ENCODE measurements at regions of chr17 and their contacts with region 1.

Region 1: DNA sequence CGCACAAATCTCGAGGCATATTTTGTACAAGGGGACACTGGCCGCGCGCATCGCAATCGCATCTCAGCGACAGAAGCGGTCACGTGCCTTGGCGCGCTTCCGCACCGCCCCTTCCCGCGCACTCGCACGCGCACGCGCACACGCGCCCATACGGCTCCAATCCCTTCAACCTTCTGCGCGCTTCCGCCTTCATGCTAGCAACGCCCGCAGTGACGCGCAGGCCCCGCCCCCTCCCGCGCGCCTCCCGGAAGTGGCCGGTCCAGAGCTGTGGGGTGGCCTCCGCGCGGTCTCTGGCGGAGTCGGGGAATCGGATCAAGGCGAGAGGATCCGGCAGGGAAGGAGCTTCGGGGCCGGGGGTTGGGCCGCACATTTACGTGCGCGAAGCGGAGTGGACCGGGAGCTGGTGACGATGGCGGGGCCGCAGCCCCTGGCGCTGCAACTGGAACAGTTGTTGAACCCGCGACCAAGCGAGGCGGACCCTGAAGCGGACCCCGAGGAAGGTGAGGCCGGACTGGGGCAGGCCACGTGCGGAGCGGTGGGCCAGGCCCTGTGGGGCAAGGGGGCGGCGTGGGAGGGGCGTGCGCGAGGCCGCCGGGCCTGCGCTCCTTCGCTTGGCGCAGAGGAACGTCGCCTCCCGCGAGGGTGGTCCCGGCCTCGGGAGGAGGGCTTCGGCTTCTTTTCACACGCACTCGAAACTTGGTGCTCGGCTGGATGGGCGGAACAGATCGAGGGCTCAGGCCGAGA is at the start of gene AATF:
- DNase-seq: peak; percentile 82 to 99 (median 96)
- ATAC-seq: peak; percentile 91
- H3K4me3 ChIP-seq: peak within 1 kb of the TSS; percentile 81 to 91
- H3K4me3 Mint-ChIP-seq: peak within 1 kb of the TSS; percentile 98
- H3K27ac ChIP-seq: peak within 1 kb of the TSS; percentile 88 to 90
- H3K27ac Mint-ChIP-seq: peak within 1 kb of the TSS; percentile 98
- H3K4me1 ChIP-seq: peaks cover 26% of the 10 kb centered on the region
- H3K4me1 Mint-ChIP-seq: peaks cover 60% of the 10 kb centered on the region
- H3K27me3 ChIP-seq: peaks cover 28 to 34% of the 10 kb centered on the region in 2 experiments
- H3K27me3 Mint-ChIP-seq: peaks cover 31% of the 10 kb centered on the region
- CTCF ChIP-seq: no peak
- total RNA-seq, gene AATF: 49.5 to 51.5 TPM

Region 2: GRCh38 chr17:36486204-36487194 is 462.4 kb before region 1 on chr17 and contains the start of gene ZNHIT3:
- CTCF ChIA-PET with region 1: no interaction called
- POLR2A ChIA-PET with region 1: no interaction called
- intact Hi-C with region 1: loop called in 1 of 2 experiments (anchors 10 kb)
- DNase-seq: peak; percentile 80 to 96 (median 90)
- ATAC-seq: peak; percentile 96
- H3K4me3 ChIP-seq: peak within 1 kb of the TSS; percentile 64 to 97
- H3K4me3 Mint-ChIP-seq: peak within 1 kb of the TSS; percentile 100
- H3K27ac ChIP-seq: peak within 1 kb of the TSS; percentile 69 to 70
- H3K27ac Mint-ChIP-seq: peak within 1 kb of the TSS; percentile 99
- H3K4me1 ChIP-seq: peaks cover 45% of the 10 kb centered on the region
- H3K4me1 Mint-ChIP-seq: peaks cover 55% of the 10 kb centered on the region
- H3K27me3 ChIP-seq: peaks cover 0 to 10% of the 10 kb centered on the region in 2 experiments
- H3K27me3 Mint-ChIP-seq: peaks cover 10% of the 10 kb centered on the region
- CTCF ChIP-seq: no peak
- total RNA-seq, gene ZNHIT3: 82.2 to 87.1 TPM

Region 3: DNA sequence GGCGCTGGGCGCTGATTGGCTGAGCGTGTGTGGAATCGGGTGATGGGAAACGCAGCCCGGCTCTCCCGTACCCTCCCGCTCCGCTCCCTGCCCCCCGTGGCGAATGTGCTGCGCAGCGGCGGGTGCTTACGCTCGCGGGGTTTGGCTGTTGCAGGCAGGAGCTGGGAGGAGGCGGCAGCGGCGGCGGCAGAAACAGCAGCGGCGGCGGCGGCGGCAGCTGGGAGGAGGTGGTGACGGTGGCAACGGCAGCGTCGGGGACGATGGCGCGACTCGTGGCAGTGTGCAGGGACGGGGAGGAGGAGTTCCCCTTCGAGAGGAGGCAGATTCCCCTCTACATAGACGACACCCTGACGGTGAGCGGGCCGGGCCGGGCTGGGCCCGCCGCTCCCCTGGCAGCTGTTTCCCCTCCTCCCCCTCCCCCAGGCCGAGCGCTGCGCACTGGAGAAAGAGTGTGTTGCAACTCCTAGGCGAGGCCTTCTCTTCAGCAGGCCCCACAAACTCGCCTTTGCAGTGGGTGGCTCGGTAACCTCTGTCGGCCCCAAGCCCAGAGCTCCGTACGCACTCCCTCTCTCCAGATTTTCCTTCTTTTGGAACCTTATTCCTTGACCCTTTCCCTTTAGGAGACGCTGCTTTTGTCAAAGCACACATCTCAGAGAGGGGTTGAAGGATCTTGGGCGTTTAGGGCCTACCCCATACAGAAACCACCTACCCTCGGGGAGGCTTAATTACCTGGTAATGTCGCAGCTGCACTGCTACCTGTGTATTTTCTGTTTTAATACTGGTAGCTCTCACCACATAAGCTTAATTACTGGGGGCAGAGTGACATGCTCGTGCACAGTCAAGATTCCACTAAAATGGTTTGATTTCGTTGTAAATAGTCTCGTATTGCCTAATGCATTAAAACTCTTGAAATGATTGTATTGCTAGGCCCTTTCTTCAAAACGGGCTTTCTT is 403.1 kb before region 1 on chr17:
- CTCF ChIA-PET with region 1: no interaction called
- POLR2A ChIA-PET with region 1: interaction called, 8 read pairs
- intact Hi-C with region 1: loop called in 1 of 2 experiments (anchors 5 kb)
- DNase-seq: peak; percentile 92 to 99 (median 97)
- ATAC-seq: peak; percentile 76
- H3K4me3 ChIP-seq: peak overlapping the region; percentile 66 to 94
- H3K4me3 Mint-ChIP-seq: peak overlapping the region; percentile 95
- H3K27ac ChIP-seq: peak overlapping the region; percentile 67 to 96
- H3K27ac Mint-ChIP-seq: peak overlapping the region; percentile 96
- H3K4me1 ChIP-seq: peaks cover 44% of the 10 kb centered on the region
- H3K4me1 Mint-ChIP-seq: peaks cover 50% of the 10 kb centered on the region
- H3K27me3 ChIP-seq: no peaks in the 10 kb centered on the region
- H3K27me3 Mint-ChIP-seq: no peaks in the 10 kb centered on the region
- CTCF ChIP-seq: no peak

Region 4: DNA sequence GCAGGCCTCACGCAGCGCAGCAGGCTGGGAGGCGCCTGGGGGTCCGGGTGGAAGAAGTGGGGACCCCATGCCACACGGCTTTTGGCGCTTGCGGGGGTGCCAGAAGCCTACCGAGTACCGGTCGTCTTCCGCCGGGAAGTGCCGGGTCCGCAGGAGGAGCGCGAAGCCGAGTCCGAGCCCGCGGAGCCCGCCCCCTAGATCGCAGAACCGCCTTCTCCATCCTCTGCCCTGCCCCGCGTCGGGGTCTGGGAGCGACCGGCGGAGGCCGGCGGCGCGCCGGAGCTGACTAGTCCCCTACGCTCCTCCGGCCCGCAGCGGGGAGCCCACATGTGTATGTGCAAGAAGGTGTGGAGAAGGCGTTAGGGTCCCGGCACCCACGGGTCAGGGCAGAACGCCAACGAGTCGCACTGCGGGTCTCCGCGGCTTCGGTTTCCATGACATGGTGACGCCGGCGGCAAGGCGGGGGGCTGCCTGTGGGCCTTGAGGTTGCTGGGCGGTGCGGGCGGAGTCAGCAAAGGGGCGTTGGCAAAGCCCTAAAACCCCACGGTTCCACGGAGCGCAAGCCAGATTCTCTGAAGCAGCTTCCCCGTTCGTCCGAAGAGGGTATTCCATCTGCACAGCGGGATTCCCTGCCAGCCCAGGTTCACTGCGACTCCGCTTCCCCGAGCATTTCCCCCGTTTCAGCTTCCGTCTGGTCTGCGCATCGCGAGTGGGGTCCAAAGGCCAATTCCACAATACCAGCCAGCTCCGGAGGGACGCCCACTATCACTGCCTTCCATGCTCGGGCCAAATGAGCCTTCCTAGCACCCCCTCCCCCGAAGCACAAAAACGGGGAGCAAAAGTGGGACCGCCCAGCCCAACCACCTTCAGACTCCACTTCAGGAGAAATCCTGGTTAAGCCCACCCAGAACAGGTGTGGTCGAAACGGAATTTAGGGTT is 13.9 kb before region 1 on chr17:
- CTCF ChIA-PET with region 1: interaction called, 3 read pairs
- POLR2A ChIA-PET with region 1: interaction called, 16 read pairs
- intact Hi-C with region 1: loop called in 1 of 2 experiments (anchors 1 kb)
- DNase-seq: peak in 4 of 9 experiments; percentile 38 to 59 (median 52)
- ATAC-seq: peak; percentile 21
- H3K4me3 ChIP-seq: peak overlapping the region; percentile 18 to 24
- H3K4me3 Mint-ChIP-seq: peak overlapping the region; percentile 60
- H3K27ac ChIP-seq: no peak overlapping the region
- H3K27ac Mint-ChIP-seq: no peak overlapping the region
- H3K4me1 ChIP-seq: peaks cover 79% of the 10 kb centered on the region
- H3K4me1 Mint-ChIP-seq: peaks cover 67% of the 10 kb centered on the region
- H3K27me3 ChIP-seq: peaks cover 88 to 96% of the 10 kb centered on the region in 2 experiments
- H3K27me3 Mint-ChIP-seq: peaks cover 83% of the 10 kb centered on the region
- CTCF ChIP-seq: no peak

Measured in CD8-positive, alpha-beta T cell (primary cell).